HEK293T (cell line): ENCODE measurements at regions of chr17 and their contacts with region 1.

Region 1: GRCh38 chr17:17624741-17625140 is 33.2 kb upstream of the PEMT start:
- DNase-seq: no peak

Region 2: DNA sequence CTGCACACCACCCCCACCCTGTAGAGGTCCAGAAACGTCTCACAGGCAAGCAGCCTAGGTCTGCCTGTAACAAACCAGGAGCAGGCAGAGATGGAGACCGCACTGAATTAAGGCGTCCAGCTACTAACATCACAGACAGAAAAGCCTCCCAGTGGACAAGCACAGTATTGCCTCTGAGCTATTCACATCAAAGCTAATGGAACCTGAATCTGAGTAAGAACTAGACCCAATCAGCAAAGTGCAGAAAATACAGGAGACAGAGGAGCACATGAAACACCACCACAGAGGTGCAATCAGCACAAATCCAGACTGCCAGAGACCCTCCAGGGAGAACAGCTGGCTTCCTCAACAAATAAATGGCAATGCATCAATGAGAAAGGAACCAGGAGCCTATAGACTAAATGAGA is 11.0 kb before region 1 on chr17:
- CTCF ChIA-PET with region 1: interaction called, 11 read pairs
- POLR2A ChIA-PET with region 1: no interaction called
- DNase-seq: peak; percentile 79

Region 3: DNA sequence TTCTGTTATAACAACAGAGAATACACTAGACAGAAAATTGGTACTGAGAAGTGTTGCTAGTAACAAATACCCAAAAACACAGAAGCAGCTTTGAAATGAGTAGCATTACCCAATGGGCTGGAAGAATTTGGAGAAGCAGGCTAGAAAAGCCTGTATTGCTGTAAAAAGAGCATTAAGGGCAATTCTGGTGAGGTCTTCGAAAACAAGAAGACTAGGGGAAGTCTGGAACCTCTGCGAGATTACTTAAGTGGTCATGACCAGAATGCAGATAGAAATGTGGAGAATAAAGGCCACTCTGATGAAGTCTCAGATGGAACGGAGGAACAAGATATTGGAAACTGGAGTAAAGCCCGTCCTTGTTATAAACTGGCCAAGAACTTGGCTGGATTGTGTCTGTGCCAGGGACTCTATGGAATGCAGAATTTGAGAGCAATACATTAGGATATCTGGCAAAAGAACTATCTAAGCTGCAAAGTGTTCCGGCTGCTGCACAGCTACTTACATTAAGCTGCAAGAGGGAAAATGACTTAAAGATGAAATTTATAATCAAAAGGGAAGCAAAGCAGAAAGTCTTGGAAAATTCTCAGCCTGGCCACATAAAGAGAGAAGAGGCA is 11.6 kb after region 1 on chr17:
- CTCF ChIA-PET with region 1: no interaction called
- POLR2A ChIA-PET with region 1: no interaction called
- DNase-seq: no peak